Activated CD4-positive, alpha-beta T cell treated with anti-CD3 and anti-CD28 coated beads for 36 hours (primary cell): ENCODE measurements at regions of chr6 and their contacts with region 1.

Region 1: DNA sequence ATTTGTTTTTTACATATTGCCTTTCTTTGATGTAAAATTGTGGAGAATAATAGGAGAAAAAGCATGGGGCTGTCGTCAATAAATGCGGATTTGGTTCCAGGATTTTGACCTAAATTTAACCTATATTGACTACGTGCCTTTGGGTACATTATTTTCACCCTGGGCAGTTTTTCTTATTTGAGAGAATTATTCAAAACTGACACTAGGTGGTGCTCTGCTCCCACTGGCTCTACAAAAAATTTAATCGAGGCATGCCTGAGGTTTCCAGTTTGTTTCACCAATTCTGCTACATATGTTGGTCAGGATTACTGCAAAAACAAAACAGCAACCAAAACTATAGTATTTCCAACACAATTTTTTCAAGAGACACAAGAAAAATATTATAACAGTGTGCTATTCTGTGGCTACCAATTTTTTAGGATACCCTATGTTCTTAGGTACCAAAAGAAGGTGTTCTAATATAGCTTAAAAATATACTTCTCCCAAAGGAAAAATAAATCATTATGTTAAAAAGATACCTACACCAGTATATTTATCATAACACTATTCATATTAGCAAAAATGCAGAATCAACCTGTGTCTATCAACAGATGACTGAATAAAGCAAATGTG is 48.6 kb upstream of the FABP7 start:
- DNase-seq: peak; percentile 25
- ATAC-seq: no peak
- H3K4me3 Mint-ChIP-seq: no peak overlapping the region
- H3K27ac Mint-ChIP-seq: no peak overlapping the region
- H3K4me1 Mint-ChIP-seq: no peaks in the 10 kb centered on the region
- H3K27me3 Mint-ChIP-seq: peaks cover 2% of the 10 kb centered on the region

Region 2: DNA sequence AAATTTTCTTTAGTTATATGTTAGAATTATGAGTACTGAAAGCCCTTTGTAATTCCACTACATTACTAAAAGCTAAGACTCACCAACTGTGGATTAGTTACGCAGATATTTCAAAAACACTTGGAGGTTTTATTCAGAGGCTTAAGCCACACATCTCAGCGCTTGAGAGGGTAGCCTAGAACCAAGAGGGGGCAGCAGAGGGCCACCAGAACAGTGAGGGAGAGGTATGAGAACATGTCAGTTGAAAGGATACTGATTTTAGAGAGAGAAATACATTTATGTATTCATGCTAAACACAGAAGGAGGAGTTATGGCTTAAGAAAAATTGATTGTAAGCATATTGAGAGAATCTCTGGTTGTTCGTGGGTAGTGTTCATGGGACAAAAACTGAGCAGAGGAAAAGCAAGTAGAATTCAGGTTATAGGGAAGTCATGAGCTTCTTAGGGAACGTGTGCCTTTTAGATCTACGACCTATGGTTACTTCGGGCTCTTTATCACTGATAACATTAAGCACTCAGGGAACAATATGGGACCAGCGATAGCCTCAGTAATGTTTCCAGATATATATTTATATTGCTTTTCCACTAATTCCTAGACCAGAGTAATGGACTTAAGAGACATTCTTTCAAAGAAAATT is 238.8 kb before region 1 on chr6:
- CTCF ChIA-PET with region 1: interaction called, 7 read pairs
- POLR2A ChIA-PET with region 1: no interaction called
- intact Hi-C with region 1: loop called (anchors 5 kb)
- DNase-seq: peak; percentile 83
- ATAC-seq: peak; percentile 100
- H3K4me3 Mint-ChIP-seq: no peak overlapping the region
- H3K27ac Mint-ChIP-seq: no peak overlapping the region
- H3K4me1 Mint-ChIP-seq: peaks cover 5% of the 10 kb centered on the region
- H3K27me3 Mint-ChIP-seq: peaks cover 3% of the 10 kb centered on the region

Region 3: DNA sequence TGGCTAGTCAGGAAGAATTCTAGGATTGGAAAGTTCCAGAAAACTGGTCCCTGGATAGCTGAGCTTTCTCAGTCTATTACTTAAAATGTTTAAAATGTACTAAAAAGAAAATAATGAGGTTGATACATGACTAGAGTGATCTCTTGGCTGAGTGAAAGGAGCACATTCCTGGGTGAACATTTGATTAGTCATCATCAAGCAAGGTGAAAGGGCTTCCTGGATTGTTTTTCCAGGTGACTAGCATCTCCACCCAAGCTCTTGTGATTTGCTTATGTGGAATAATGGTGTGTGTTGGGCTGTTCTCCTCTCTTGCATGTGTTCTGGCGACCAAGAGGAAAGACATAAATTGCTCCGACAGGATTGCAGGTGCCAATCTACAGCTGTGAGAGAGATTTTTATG is 77.8 kb before region 1 on chr6:
- CTCF ChIA-PET with region 1: no interaction called
- POLR2A ChIA-PET with region 1: no interaction called
- intact Hi-C with region 1: no loop called
- DNase-seq: no peak
- ATAC-seq: no peak
- H3K4me3 Mint-ChIP-seq: no peak overlapping the region
- H3K27ac Mint-ChIP-seq: no peak overlapping the region
- H3K4me1 Mint-ChIP-seq: no peaks in the 10 kb centered on the region
- H3K27me3 Mint-ChIP-seq: no peaks in the 10 kb centered on the region

Region 4: DNA sequence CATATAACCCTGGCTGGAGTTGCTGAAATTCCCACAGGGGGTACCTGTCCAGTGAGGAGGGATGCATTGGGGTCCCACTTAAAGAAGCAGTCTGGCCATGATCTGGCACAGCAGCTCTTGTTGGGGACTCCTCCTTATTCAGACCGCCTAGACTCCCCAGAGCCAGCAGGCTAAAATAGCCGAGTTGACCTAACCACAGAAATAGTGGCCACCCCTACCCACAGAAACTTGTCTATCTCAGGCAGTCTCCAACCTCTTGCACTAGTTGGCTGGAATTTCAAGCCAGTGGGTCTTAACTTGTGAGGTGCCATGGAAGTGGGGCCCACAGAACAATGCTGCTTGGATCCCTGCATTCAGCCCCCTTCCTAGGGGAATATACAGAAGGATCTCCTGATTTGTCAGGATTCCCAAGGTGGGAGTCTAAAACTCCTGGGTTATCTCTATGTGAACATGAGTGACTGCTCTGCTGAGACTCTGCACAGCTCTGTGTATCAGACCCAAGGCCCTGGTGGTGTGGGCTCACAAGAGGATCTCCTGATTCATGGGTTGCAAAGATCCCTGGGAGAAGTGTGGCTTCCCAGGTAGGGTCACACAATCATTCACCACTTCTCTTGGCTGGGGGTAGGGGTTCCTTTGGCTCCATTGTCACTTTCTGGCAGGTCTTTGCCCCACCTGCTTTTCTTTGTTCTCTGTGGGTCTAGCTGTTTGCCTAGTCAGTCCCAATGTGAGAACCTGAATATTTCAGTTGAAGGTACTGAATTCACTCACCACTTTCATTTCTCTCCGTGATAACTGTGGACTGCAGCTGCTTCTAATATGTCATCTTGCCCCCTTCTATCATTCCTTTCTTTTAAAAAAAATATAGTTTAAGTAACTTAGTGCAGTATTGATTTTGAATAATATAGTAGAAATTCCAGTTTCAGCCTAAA is 199.6 kb after region 1 on chr6:
- CTCF ChIA-PET with region 1: no interaction called
- POLR2A ChIA-PET with region 1: no interaction called
- intact Hi-C with region 1: no loop called
- DNase-seq: no peak
- ATAC-seq: no peak
- H3K4me3 Mint-ChIP-seq: no peak overlapping the region
- H3K27ac Mint-ChIP-seq: no peak overlapping the region
- H3K4me1 Mint-ChIP-seq: no peaks in the 10 kb centered on the region
- H3K27me3 Mint-ChIP-seq: no peaks in the 10 kb centered on the region